ENCODE measurements at regions of chr1 and their contacts with region 1.

Region 1: GRCh38 chr1:45490626-45491486 is at the start of gene TESK2:
- DNase-seq: peak; percentile 99
- ATAC-seq: peak; percentile 96
- H3K4me3 ChIP-seq: peak within 1 kb of the TSS; percentile 63
- H3K27ac ChIP-seq: peak within 1 kb of the TSS; percentile 8
- H3K4me1 ChIP-seq: no peaks in the 10 kb centered on the region
- H3K27me3 ChIP-seq: no peaks in the 10 kb centered on the region
- CTCF ChIP-seq: 0 out of 2 replicates have a peak, but pooled peaks have one; percentile 14
- POLR2A ChIP-seq: peak; percentile 62; the same call in 1 of the 2 replicates
- RAD21 ChIP-seq: no peak
- total RNA-seq, gene TESK2: 0.83 and 0.90 TPM in 2 replicates

Region 2: GRCh38 chr1:44894591-44894990 is 596.3 kb before region 1 on chr1:
- CTCF ChIA-PET with region 1: no interaction called
- POLR2A ChIA-PET with region 1: no interaction called
- dilution Hi-C with region 1: no loop called
- in situ Hi-C with region 1: no loop called
- intact Hi-C with region 1: no loop called
- DNase-seq: peak; percentile 97
- ATAC-seq: peak; percentile 84
- H3K4me3 ChIP-seq: no peak overlapping the region
- H3K27ac ChIP-seq: no peak overlapping the region
- H3K4me1 ChIP-seq: peaks cover 17% of the 10 kb centered on the region
- H3K27me3 ChIP-seq: no peaks in the 10 kb centered on the region
- CTCF ChIP-seq: no peak
- POLR2A ChIP-seq: no peak
- RAD21 ChIP-seq: no peak

Region 3: DNA sequence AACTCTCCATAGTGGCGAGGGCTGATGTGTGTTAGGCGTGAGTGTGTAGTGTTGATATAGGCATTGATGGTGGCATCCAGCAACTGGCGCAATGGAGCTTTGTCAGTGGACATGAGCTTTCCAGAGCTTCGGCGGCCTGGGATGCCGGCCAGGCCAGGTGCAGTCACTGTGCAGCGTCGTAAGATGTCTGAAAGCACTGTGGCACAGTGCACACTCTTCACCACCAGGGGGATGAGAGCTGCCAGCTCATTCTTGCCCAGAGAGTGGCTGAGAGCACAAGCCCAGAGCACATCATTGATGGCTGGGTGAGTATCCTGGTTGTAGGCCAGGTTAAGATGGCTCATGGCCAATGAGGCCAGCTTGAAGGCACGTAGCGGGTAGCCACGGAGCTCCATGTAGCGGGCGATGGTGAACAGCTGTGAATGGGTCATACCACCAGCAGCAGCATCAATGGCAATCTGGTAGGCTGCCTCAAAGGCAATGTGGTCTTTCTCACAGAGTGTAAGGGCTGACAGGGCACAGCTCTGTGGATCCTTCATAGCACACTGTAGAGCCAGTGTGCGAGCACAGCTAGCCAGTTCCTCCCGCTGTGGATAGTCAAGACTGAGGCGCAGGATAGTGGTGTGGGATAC is 472.1 kb before region 1 on chr1:
- CTCF ChIA-PET with region 1: interaction called, 4 read pairs
- POLR2A ChIA-PET with region 1: no interaction called
- dilution Hi-C with region 1: no loop called
- in situ Hi-C with region 1: loop called (anchors 5 kb)
- intact Hi-C with region 1: loop called (anchors 1 kb)
- DNase-seq: peak; percentile 53
- ATAC-seq: peak; percentile 87
- H3K4me3 ChIP-seq: no peak overlapping the region
- H3K27ac ChIP-seq: no peak overlapping the region
- H3K4me1 ChIP-seq: peaks cover 3% of the 10 kb centered on the region; the same call in 1 of the 2 replicates
- H3K27me3 ChIP-seq: peaks cover 1% of the 10 kb centered on the region; the same call in 1 of the 2 replicates
- CTCF ChIP-seq: peak; percentile 76
- POLR2A ChIP-seq: no peak
- RAD21 ChIP-seq: peak; percentile 78

Region 4: GRCh38 chr1:45348716-45349677 is 141.9 kb before region 1 on chr1:
- CTCF ChIA-PET with region 1: no interaction called
- POLR2A ChIA-PET with region 1: no interaction called
- dilution Hi-C with region 1: no loop called
- in situ Hi-C with region 1: loop called (anchors 5 kb)
- intact Hi-C with region 1: no loop called
- DNase-seq: no peak
- ATAC-seq: peak; percentile 50
- H3K4me3 ChIP-seq: no peak overlapping the region
- H3K27ac ChIP-seq: no peak overlapping the region
- H3K4me1 ChIP-seq: peaks cover 14% of the 10 kb centered on the region
- H3K27me3 ChIP-seq: no peaks in the 10 kb centered on the region
- CTCF ChIP-seq: no peak
- POLR2A ChIP-seq: no peak
- RAD21 ChIP-seq: no peak

Region 5: GRCh38 chr1:45359882-45360513 is 130.9 kb before region 1 on chr1:
- CTCF ChIA-PET with region 1: interaction called, 95 read pairs
- POLR2A ChIA-PET with region 1: interaction called, 9 read pairs
- dilution Hi-C with region 1: no loop called
- in situ Hi-C with region 1: no loop called
- intact Hi-C with region 1: loop called (anchors 1 kb)
- DNase-seq: peak; percentile 77
- ATAC-seq: peak; percentile 71
- H3K4me3 ChIP-seq: no peak overlapping the region
- H3K27ac ChIP-seq: no peak overlapping the region
- H3K4me1 ChIP-seq: no peaks in the 10 kb centered on the region; the same call in 1 of the 2 replicates
- H3K27me3 ChIP-seq: no peaks in the 10 kb centered on the region
- CTCF ChIP-seq: peak; percentile 80
- POLR2A ChIP-seq: no peak
- RAD21 ChIP-seq: peak; percentile 84

Region 6: DNA sequence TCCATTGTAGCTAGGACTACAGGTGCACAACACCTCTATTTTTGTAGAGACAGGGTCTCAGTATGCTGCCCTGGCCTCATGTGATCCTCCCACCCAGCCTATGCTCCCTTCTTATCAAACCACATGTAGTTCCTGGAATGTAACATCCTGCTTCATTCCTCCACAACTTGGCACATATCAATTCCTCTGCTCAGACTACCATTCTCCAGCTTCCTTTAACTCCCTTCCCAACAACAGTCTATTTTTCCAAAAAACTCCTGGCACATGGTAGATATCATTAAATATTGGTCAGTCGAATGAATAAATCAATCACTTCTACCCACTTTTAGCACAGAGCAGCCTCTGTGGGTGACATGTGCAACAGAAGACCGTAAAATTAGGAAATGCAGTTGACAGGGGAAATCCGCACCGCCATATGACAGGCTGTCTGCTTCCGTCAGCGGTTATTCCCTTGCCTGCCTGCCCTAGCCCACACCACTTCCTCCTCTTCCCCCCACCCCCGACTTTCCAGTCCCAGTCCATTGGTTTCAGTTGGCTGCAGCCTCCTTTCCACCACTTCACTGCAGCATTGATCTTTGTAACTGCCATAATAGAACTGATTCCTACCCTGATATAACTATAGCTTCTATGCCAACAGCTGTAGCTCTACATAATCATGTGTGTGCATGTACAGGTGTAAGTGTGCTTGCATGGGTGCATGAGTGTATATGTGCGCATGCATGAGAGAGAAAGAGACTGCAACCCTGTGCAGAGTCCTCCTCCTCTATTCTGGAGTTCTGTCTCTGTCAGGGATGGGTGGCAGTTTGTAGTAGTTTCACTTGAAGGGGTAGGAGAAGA is 52.9 kb after region 1 on chr1:
- CTCF ChIA-PET with region 1: no interaction called
- POLR2A ChIA-PET with region 1: no interaction called
- dilution Hi-C with region 1: no loop called
- in situ Hi-C with region 1: no loop called
- intact Hi-C with region 1: no loop called
- DNase-seq: no peak
- ATAC-seq: no peak
- H3K4me3 ChIP-seq: no peak overlapping the region
- H3K27ac ChIP-seq: no peak overlapping the region
- H3K4me1 ChIP-seq: no peaks in the 10 kb centered on the region
- H3K27me3 ChIP-seq: peaks cover 2% of the 10 kb centered on the region; the same call in 1 of the 2 replicates
- CTCF ChIP-seq: no peak
- POLR2A ChIP-seq: no peak
- RAD21 ChIP-seq: no peak

Region 7: GRCh38 chr1:45569962-45570581 is 79.2 kb after region 1 on chr1:
- CTCF ChIA-PET with region 1: interaction called, 3 read pairs
- POLR2A ChIA-PET with region 1: no interaction called
- dilution Hi-C with region 1: no loop called
- in situ Hi-C with region 1: no loop called
- intact Hi-C with region 1: loop called (anchors 2 kb)
- DNase-seq: peak; percentile 78
- ATAC-seq: peak; percentile 98
- H3K4me3 ChIP-seq: no peak overlapping the region
- H3K27ac ChIP-seq: no peak overlapping the region
- H3K4me1 ChIP-seq: no peaks in the 10 kb centered on the region
- H3K27me3 ChIP-seq: no peaks in the 10 kb centered on the region
- CTCF ChIP-seq: peak; percentile 97
- POLR2A ChIP-seq: peak; percentile 42; the same call in 1 of the 2 replicates
- RAD21 ChIP-seq: peak; percentile 96

Region 8: GRCh38 chr1:46236882-46237281 is 746.0 kb after region 1 on chr1:
- CTCF ChIA-PET with region 1: no interaction called
- POLR2A ChIA-PET with region 1: interaction called, 11 read pairs
- dilution Hi-C with region 1: no loop called
- in situ Hi-C with region 1: no loop called
- intact Hi-C with region 1: no loop called
- DNase-seq: no peak
- ATAC-seq: no peak
- H3K4me3 ChIP-seq: no peak overlapping the region
- H3K27ac ChIP-seq: no peak overlapping the region
- H3K4me1 ChIP-seq: no peaks in the 10 kb centered on the region
- H3K27me3 ChIP-seq: no peaks in the 10 kb centered on the region
- CTCF ChIP-seq: no peak
- POLR2A ChIP-seq: no peak
- RAD21 ChIP-seq: no peak

Measured in IMR-90 (cell line).